ENCODE measurements at regions of chr9 and their contacts with region 1.

Region 1: DNA sequence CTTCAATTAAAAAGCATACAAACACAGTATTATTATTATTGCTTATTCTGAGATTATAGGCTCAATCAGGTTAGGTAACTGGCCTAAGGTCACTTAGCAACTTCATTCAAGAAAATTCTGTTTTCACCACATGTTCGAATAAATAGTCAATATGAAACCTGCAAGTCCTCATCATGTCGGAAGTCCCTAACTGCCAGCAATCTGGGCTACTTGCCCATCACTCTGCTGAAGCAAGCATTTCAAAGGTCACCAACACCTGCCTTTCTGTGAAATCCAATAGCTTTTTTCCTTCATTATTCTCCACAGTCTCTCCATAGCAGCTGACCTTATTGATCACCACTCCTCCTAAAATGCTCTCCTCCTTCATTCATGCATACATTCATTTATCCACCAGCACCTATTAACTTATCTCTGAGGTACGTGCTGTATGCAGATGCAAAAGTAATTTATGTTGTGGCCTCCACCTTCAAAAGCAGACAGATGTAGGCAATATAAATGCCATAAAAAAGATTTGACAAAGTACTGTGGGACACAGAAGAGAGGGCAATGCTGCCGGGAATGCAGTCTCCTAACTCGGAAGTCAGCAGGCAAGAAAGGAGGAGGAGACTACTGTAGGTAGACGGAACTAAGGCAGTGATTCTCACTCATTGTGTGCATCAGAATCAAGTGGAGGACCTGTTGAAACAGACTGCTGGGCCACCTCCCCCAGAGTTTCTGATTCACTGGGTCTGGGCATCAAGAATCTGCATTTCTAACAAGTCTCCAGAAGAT is 310.9 kb downstream of the BNC2 start:
- DNase-seq: no peak
- ATAC-seq: no peak
- H3K4me3 ChIP-seq: no peak overlapping the region
- H3K27ac ChIP-seq: no peak overlapping the region
- H3K4me1 ChIP-seq: peaks cover 9% of the 10 kb centered on the region
- H3K27me3 ChIP-seq: no peaks in the 10 kb centered on the region
- CTCF ChIP-seq: no peak
- POLR2A ChIP-seq: no peak
- RAD21 ChIP-seq: no peak

Region 2: GRCh38 chr9:15722888-15723287 is 836.7 kb before region 1 on chr9:
- CTCF ChIA-PET with region 1: no interaction called
- POLR2A ChIA-PET with region 1: no interaction called
- dilution Hi-C with region 1: no loop called
- in situ Hi-C with region 1: no loop called
- intact Hi-C with region 1: no loop called
- DNase-seq: peak; percentile 31
- ATAC-seq: peak; percentile 21; the same call in 1 of the 2 replicates
- H3K4me3 ChIP-seq: no peak overlapping the region
- H3K27ac ChIP-seq: no peak overlapping the region
- H3K4me1 ChIP-seq: peaks cover 4% of the 10 kb centered on the region; the same call in 1 of the 2 replicates
- H3K27me3 ChIP-seq: no peaks in the 10 kb centered on the region
- CTCF ChIP-seq: no peak
- POLR2A ChIP-seq: no peak
- RAD21 ChIP-seq: no peak

Region 3: DNA sequence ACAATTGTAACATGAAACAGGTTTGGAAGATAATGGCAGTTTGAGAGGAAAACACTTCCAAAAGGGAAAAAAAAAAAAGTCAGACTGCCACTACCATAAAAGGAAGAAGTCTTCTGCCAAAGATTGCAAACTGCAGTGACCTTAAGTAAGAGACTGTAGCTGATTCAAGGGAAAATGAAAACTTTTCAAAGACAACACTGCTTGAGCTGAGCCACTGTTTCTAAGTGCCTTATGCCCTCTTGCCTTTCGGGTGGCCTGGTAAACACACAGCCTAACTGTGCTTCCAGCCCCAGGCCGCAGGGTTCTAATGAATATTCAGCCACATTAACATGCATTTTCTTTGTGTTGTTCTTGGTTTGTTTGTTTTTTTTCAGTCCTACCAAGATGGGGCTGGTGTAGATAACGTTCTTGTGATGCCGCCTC is 43.7 kb before region 1 on chr9:
- CTCF ChIA-PET with region 1: no interaction called
- POLR2A ChIA-PET with region 1: no interaction called
- dilution Hi-C with region 1: no loop called
- in situ Hi-C with region 1: no loop called
- intact Hi-C with region 1: no loop called
- DNase-seq: peak; percentile 84
- ATAC-seq: peak; percentile 81
- H3K4me3 ChIP-seq: no peak overlapping the region
- H3K27ac ChIP-seq: peak overlapping the region; percentile 100
- H3K4me1 ChIP-seq: peaks cover 18% of the 10 kb centered on the region
- H3K27me3 ChIP-seq: no peaks in the 10 kb centered on the region
- CTCF ChIP-seq: no peak
- POLR2A ChIP-seq: no peak
- RAD21 ChIP-seq: no peak

Region 4: GRCh38 chr9:16543686-16544085 is 15.9 kb before region 1 on chr9:
- CTCF ChIA-PET with region 1: no interaction called
- POLR2A ChIA-PET with region 1: no interaction called
- dilution Hi-C with region 1: no loop called
- in situ Hi-C with region 1: no loop called
- intact Hi-C with region 1: loop called (anchors 2 kb)
- DNase-seq: peak; percentile 41
- ATAC-seq: no peak; the same call in 1 of the 2 replicates
- H3K4me3 ChIP-seq: no peak overlapping the region
- H3K27ac ChIP-seq: no peak overlapping the region
- H3K4me1 ChIP-seq: peaks cover 6% of the 10 kb centered on the region
- H3K27me3 ChIP-seq: no peaks in the 10 kb centered on the region
- CTCF ChIP-seq: no peak
- POLR2A ChIP-seq: no peak
- RAD21 ChIP-seq: no peak